ENCODE measurements at regions of chr18 and their contacts with region 1.

Region 1: DNA sequence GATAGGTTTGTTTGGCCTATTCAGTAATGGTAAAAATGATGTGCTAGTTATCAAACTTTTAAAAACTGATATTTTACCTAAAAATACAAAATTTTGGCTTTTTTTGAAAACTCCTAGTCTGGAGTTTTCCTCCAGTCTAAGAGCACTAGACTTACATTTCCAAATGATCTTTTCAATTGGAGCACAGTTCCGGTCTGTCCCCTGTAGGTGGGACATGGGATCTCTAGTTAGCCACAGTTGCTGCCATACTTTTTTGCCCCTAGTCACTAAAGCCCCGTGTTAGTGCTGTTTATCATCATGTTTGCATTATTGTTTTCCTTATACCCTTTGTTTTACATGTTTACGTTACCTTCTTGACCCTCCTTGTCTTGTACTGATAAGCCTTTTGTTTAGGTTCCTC is 52.4 kb downstream of the RELCH start:
- DNase-seq: no peak
- ATAC-seq: no peak
- H3K4me3 ChIP-seq: no peak overlapping the region
- H3K27ac ChIP-seq: no peak overlapping the region
- H3K4me1 ChIP-seq: no peaks in the 10 kb centered on the region
- H3K27me3 ChIP-seq: no peaks in the 10 kb centered on the region
- CTCF ChIP-seq: no peak

Region 2: DNA sequence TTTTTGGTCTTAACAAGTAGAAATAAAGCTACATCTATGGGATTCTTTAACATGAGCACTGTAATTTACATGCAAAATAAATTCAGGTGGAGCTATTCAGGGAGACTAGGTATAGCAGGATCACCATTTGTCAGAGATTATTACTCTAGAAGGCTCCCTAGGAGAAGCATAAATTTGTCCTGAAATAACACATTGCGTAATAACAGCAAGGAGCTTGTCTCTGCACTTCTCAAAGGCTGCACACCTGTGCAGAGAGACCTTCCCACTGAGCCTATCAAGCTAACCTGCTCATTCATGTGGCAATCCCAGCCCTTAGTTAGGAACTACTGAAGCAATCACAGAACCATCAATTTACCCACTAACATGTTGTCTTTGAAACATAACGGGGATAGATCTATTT is 1429.5 kb before region 1 on chr18:
- intact Hi-C with region 1: no loop called
- DNase-seq: no peak
- ATAC-seq: no peak
- H3K4me3 ChIP-seq: no peak overlapping the region
- H3K27ac ChIP-seq: no peak overlapping the region
- H3K4me1 ChIP-seq: no peaks in the 10 kb centered on the region
- H3K27me3 ChIP-seq: no peaks in the 10 kb centered on the region
- CTCF ChIP-seq: no peak

Region 3: DNA sequence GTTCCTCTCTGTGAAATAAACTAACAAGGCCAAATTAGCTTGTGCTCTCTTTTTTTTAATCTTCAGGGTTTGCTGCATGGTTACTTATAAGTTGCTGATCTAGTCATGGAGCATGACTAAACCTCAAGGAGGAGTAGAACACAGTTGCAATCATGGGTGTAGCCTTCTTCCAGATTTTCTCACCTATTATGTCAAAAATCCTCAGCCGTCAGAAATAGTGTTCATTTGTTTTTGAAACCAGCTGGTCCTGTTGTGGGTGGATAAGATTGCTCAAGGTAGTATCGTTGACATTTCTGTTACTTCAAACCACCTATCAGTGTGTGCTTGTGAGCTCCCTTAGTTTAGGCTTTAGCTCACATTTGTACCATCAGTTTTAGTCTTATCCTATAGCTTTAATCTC is 41.2 kb before region 1 on chr18:
- intact Hi-C with region 1: loop called in 1 of 10 experiments (anchors 5 kb)
- DNase-seq: no peak
- ATAC-seq: no peak
- H3K4me3 ChIP-seq: no peak overlapping the region
- H3K27ac ChIP-seq: no peak overlapping the region
- H3K4me1 ChIP-seq: peaks cover 0 to 52% (median 16%) of the 10 kb centered on the region in 9 donors
- H3K27me3 ChIP-seq: no peaks in the 10 kb centered on the region
- CTCF ChIP-seq: no peak

Region 4: DNA sequence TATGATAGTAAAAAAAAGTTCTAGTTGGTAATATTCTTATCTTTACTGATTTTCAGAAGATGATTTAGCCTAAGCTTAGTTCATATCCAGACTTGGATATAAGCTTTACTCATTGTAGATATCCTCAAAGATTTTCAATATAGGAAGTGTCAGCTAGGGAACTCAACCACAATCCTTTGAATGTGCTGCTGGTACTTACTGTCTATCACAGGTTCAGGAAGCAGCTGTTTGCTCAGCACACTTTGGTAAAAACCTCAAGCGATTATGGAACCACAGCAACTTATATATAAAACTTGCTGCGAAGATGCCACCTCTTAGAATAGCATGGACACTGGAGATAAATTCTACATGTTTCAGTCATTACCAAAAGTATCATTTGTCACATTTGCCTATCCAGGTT is 25.5 kb after region 1 on chr18:
- intact Hi-C with region 1: loop called in 1 of 10 experiments (anchors 5 kb)
- DNase-seq: no peak
- ATAC-seq: no peak
- H3K4me3 ChIP-seq: no peak overlapping the region
- H3K27ac ChIP-seq: no peak overlapping the region
- H3K4me1 ChIP-seq: no peaks in the 10 kb centered on the region
- H3K27me3 ChIP-seq: no peaks in the 10 kb centered on the region
- CTCF ChIP-seq: no peak